ENCODE measurements at regions of chr11 and their contacts with region 1.

Region 1: GRCh38 chr11:87290304-87290922 is 252.7 kb downstream of the TMEM135 start:
- DNase-seq: peak; percentile 19
- H3K4me3 ChIP-seq: no peak overlapping the region
- CTCF ChIP-seq: peak; percentile 26

Region 2: DNA sequence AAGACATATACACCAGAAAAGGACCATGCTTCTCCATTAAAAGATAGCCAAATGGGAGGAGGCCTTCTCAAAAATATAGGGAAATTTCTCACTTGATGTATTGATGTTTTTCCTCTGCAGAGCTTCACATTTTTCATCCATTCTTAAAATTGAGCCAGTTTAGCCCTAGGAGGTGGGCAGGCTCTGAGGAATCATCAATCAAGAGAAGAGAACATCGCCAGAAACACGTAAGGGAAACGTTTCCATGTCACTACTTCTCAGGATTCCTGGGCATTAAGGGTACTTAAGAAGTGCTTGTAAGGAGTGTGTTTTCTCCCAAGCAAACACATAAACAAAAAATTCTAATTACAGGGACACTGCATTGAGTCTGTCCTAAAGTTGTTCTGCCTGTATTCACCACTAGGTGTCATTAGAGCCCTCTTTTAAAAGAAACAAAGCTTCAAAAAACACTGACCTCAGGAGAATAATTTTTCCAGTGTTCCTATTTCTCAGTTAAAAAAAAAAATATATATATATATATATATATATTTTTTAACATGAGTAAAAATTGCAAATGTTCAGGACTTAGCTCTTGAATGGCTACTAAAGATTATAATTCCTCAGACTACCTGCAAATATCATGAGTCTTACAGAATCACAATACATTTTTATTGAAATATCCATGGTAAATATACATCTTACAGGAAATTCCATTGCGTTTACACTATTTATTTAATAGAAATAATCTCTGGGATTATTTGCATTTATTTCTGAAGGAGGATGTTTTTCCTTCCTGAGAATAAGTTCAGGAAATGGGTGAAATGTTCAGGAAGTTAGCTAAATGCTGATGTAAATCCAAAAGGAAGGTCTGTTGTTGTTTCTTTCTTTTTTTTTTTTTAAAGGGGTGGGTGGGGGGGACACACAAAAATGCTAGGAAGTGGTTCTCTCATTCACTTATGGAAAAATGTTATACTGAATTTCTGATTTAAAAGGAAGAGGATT is 351.2 kb before region 1 on chr11:
- CTCF ChIA-PET with region 1: interaction called, 241 read pairs
- POLR2A ChIA-PET with region 1: no interaction called
- DNase-seq: no peak
- H3K4me3 ChIP-seq: no peak overlapping the region
- CTCF ChIP-seq: peak; percentile 58

Region 3: GRCh38 chr11:86955361-86956120 is 334.9 kb before region 1 on chr11 and contains the start of gene FZD4:
- CTCF ChIA-PET with region 1: interaction called, 16 read pairs
- POLR2A ChIA-PET with region 1: no interaction called
- DNase-seq: no peak
- H3K4me3 ChIP-seq: peak within 1 kb of the TSS; percentile 92
- CTCF ChIP-seq: peak; percentile 30

Region 4: DNA sequence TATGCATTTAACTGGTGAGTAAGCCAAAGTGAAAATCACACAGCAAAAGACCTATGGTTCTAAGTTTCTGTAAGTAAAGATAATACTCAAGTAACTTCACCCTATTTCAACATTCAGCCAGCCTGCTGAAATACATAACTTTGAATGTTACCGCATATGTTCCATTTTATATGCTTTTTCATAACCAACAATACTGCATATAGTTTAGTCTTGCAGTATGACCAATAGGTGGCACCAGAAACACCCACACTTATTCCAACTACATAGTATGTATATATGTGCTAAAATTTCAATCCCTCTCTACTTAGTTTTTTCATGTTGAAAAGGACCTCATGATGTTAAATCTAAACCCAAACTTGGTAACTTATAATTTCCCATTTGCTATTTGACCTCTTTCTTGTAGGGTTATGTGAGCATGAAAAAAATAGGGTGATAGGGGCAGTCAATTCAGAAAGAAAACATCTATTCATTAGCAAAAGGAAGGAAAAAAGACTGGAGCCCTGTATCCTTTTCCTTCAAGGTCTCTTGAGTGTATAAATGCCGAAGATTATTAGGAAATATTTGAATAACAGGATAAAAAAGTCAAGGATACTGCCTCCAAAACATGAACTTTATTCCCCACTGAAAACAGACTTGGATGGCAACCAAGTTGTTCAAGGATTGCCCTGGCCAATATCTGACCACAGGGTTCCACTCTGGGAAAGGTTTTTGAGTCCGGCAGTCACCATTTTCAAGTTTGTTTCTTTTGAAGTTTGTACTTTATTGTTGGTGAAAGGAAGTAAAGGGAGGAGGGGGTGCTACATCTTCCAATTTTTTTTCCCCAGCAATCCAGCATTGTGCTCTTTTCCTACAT is 311.4 kb before region 1 on chr11:
- CTCF ChIA-PET with region 1: interaction called, 13 read pairs
- POLR2A ChIA-PET with region 1: no interaction called
- DNase-seq: no peak
- H3K4me3 ChIP-seq: no peak overlapping the region
- CTCF ChIP-seq: peak; percentile 40

Region 5: DNA sequence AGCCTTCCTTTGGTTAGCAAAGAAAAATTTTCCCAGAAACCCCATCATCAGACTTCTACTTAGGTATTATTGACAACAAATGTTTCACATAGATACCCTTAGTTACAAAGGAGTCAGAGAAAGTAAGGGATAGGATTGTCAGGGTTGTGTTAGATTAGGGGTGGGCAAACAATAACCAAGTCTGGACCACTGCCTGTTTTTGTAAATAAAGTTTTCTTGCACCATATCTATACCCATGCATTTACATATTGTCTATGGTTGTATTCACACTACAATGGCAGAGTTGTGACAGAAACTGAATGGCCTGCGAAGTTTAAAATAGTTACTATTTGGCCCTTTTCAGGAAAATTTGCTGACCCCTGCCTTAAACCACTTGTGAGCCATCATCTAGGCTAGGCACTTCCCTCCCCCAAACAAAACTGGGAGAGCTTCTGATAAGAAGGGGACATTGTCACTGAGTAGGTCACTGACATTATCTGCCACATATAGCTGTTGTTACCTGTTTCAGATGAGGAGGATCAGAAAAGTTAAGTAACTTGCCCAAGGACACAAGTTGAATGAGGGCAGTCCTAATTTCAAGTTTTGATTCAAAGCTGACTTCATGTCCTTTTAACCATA is 293.4 kb before region 1 on chr11:
- CTCF ChIA-PET with region 1: interaction called, 53 read pairs
- POLR2A ChIA-PET with region 1: no interaction called
- DNase-seq: no peak
- H3K4me3 ChIP-seq: no peak overlapping the region
- CTCF ChIP-seq: no peak

Measured in AG04449 (cell line).